Tibial artery (tissue), 4 donors: ENCODE measurements at regions of chr1 and their contacts with region 1.

Region 1: GRCh38 chr1:16351994-16352841 is at the start of gene FBXO42:
- DNase-seq: peak; percentile 89 to 95
- H3K4me3 ChIP-seq: peak within 1 kb of the TSS; percentile 68 to 86
- H3K27ac ChIP-seq: peak within 1 kb of the TSS; percentile 87 to 91
- H3K4me1 ChIP-seq: peaks cover 0 to 54% (median 23%) of the 10 kb centered on the region in 4 donors
- H3K27me3 ChIP-seq: no peaks in the 10 kb centered on the region
- CTCF ChIP-seq: peak; percentile 21 to 39

Region 2: DNA sequence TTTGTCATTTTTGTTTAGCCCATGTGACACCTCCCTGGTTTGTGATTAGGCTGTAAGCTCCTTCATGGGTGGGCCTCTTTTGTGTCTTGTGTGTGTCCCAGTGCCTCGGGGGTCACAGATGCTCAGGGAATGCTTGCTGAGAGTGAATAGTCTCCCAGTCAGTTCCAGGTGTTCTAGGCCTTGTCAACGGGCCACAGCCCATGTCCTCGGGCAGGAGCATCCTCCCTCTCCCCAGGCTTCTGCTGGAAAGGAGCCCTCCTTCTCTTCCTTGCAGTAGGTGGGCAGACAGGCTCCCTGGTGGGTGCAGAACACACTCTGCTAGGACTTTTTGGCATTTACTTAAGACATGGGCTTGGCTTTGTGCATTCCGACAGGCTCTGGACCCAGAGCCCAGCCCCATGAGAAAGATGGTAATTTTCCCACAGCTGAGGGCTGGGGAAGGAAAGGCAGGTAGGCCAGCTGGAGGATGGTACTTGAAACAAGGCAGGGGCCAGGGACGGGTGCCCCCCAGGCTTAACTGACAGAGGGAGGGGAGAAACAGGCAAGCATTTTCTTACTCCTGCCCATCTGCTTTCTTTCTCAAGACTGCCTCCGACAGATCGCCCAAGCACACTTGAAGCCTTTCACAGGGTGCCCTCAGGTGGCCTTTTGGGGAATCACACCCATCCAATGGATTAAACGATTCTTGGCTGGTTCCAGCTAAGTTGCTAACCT is 108.1 kb before region 1 on chr1:
- intact Hi-C with region 1: loop called (anchors 5 kb)
- DNase-seq: peak; percentile 83 to 90
- H3K4me3 ChIP-seq: no peak overlapping the region
- H3K27ac ChIP-seq: peak overlapping the region; percentile 77 to 83
- H3K4me1 ChIP-seq: peaks cover 0 to 59% (median 33%) of the 10 kb centered on the region in 4 donors
- H3K27me3 ChIP-seq: no peaks in the 10 kb centered on the region
- CTCF ChIP-seq: peak; percentile 85 to 87

Region 3: DNA sequence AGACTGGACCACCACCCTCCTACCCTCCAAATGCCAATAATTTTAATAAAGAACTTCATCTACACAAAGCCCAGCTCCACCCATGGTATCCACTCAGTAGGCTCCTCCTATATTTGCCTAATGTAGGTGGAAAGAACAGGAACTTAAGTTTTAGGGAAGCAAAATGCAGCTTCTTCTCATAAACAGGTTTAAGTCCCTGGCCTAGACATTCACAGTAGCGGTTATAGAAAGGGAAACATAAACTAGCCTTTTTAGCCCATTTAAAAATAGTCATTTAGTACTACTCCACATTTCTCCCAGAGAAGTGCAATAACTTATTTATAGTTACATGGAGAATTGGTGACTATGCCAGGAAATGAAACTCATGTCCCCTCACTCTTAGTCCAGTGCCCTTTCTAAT is 58.7 kb before region 1 on chr1:
- intact Hi-C with region 1: loop called (anchors 10 kb)
- DNase-seq: no peak
- H3K4me3 ChIP-seq: no peak overlapping the region
- H3K27ac ChIP-seq: peak overlapping the region; percentile 77 to 80
- H3K4me1 ChIP-seq: peaks cover 0 to 98% (median 52%) of the 10 kb centered on the region in 4 donors
- H3K27me3 ChIP-seq: no peaks in the 10 kb centered on the region
- CTCF ChIP-seq: no peak

Region 4: GRCh38 chr1:16326833-16327404 is 25.3 kb before region 1 on chr1:
- intact Hi-C with region 1: no loop called
- DNase-seq: no peak
- H3K4me3 ChIP-seq: no peak overlapping the region
- H3K27ac ChIP-seq: peak overlapping the region in 1 of 2 donors; percentile 12
- H3K4me1 ChIP-seq: peaks cover 0 to 95% (median 29%) of the 10 kb centered on the region in 4 donors
- H3K27me3 ChIP-seq: no peaks in the 10 kb centered on the region
- CTCF ChIP-seq: no peak

Region 5: GRCh38 chr1:16420424-16421118 is 68.4 kb after region 1 on chr1:
- intact Hi-C with region 1: no loop called
- DNase-seq: no peak
- H3K4me3 ChIP-seq: no peak overlapping the region
- H3K27ac ChIP-seq: no peak overlapping the region
- H3K4me1 ChIP-seq: no peaks in the 10 kb centered on the region
- H3K27me3 ChIP-seq: peaks cover 0 to 7% of the 10 kb centered on the region in 2 donors
- CTCF ChIP-seq: no peak